WTC11 (cell line): ENCODE measurements at regions of chr12 and their contacts with region 1.

Region 1: GRCh38 chr12:2853626-2854025 is 3.2 kb downstream of the TEX52 start:
- DNase-seq: peak; percentile 95
- ATAC-seq: peak; percentile 93
- H3K4me3 Mint-ChIP-seq: no peak overlapping the region
- H3K27ac Mint-ChIP-seq: no peak overlapping the region
- H3K4me1 Mint-ChIP-seq: peaks cover 3% of the 10 kb centered on the region; the same call in 1 of the 2 replicates
- H3K27me3 Mint-ChIP-seq: no peaks in the 10 kb centered on the region; the same call in 1 of the 2 replicates
- CTCF ChIP-seq: peak; percentile 88

Region 2: DNA sequence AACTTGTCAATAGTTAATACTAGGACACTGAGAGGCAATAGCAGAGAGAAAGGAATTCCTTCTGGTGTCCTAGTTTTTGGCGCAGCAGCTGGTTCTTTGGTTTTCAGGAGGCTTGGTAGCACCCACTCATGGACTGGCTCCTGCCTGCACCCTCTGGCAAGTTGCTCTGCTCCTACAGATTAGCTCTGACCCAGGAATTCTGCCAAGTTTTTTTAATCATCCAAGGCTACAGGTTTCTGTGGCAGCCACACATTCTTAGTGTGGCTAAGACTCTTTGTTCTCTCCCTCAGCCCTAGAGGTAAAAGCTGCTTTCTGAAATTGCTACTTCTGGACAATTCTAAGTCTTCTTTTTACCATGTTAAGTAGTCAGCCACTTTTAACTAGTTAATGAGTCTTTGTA is 130.8 kb before region 1 on chr12:
- CTCF ChIA-PET with region 1: no interaction called
- POLR2A ChIA-PET with region 1: no interaction called
- DNase-seq: no peak
- ATAC-seq: no peak
- H3K4me3 Mint-ChIP-seq: no peak overlapping the region
- H3K27ac Mint-ChIP-seq: no peak overlapping the region
- H3K4me1 Mint-ChIP-seq: no peaks in the 10 kb centered on the region
- H3K27me3 Mint-ChIP-seq: peaks cover 27% of the 10 kb centered on the region
- CTCF ChIP-seq: no peak

Region 3: GRCh38 chr12:2864198-2864597 is 10.6 kb after region 1 on chr12:
- CTCF ChIA-PET with region 1: interaction called, 10 read pairs
- POLR2A ChIA-PET with region 1: interaction called, 4 read pairs
- DNase-seq: no peak
- ATAC-seq: no peak
- H3K4me3 Mint-ChIP-seq: no peak overlapping the region
- H3K27ac Mint-ChIP-seq: no peak overlapping the region
- H3K4me1 Mint-ChIP-seq: no peaks in the 10 kb centered on the region
- H3K27me3 Mint-ChIP-seq: no peaks in the 10 kb centered on the region
- CTCF ChIP-seq: no peak

Region 4: DNA sequence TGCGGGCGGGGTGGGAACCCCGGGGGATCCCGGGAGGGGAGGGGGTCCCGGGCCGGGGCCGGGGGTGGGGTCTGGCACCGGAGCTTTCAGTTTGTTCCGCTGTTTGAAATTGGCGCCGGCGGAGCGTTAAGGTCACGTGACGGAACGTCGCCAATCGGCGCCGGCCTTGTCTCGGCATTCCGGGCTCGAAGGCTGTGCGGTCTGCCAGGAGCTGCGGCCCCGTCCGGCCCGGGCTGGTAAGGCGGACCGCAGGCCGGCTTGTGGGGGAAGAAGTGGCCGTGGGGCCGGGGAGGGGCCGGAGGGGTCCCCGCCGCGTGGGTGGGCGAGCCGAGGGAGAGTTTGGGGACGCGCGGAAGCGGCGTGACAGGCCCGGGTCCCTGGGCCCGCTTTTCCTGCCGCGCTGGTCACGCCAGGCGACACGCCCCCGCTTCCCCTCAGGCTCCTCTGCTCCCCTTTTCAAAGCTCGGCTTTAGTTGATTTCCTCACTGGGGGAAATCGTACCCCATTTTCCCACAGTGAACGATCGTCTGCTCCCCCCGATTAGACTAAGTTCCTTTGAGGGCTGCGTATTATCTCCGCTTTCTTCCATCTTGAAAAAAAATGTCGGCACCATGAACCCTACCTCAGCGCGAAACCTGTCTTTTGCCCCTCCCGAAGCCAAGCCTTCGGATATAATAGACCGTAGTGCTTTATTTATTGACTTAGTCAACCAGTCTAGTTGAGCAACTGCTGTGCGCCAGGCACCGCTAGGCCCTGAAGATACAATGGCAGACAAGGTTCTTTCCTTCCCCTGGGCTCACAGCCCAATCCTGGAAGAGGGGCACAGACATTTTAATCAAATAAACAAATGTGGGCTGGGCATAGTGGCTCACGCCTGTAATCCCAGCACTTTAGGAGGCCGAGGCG is 23.7 kb after region 1 on chr12 and contains the starts of genes FOXM1 and RHNO1:
- CTCF ChIA-PET with region 1: interaction called, 22 read pairs
- POLR2A ChIA-PET with region 1: interaction called, 4 read pairs
- DNase-seq: peak; percentile 94
- ATAC-seq: peak; percentile 77
- H3K4me3 Mint-ChIP-seq: peak within 1 kb of the TSS; percentile 99
- H3K27ac Mint-ChIP-seq: peak within 1 kb of the TSS; percentile 94
- H3K4me1 Mint-ChIP-seq: peaks cover 25% of the 10 kb centered on the region
- H3K27me3 Mint-ChIP-seq: no peaks in the 10 kb centered on the region
- CTCF ChIP-seq: no peak
- total RNA-seq, gene FOXM1: 99.6 to 118 TPM (median 100 TPM) in 3 replicates
- total RNA-seq, gene RHNO1: 48.0 to 50.3 TPM (median 49.5 TPM) in 3 replicates

Region 5: GRCh38 chr12:2884810-2885209 is 31.2 kb after region 1 on chr12:
- CTCF ChIA-PET with region 1: interaction called, 25 read pairs
- POLR2A ChIA-PET with region 1: interaction called, 3 read pairs
- DNase-seq: no peak
- ATAC-seq: no peak
- H3K4me3 Mint-ChIP-seq: no peak overlapping the region
- H3K27ac Mint-ChIP-seq: peak overlapping the region; percentile 91
- H3K4me1 Mint-ChIP-seq: peaks cover 12% of the 10 kb centered on the region
- H3K27me3 Mint-ChIP-seq: no peaks in the 10 kb centered on the region
- CTCF ChIP-seq: no peak